ENCODE measurements at regions of chr1 and their contacts with region 1.

Region 1: GRCh38 chr1:235128456-235129328 is at the start of gene TOMM20:
- DNase-seq: peak; percentile 98
- total RNA-seq, gene TOMM20: 75.4 to 86.2 TPM

Region 2: DNA sequence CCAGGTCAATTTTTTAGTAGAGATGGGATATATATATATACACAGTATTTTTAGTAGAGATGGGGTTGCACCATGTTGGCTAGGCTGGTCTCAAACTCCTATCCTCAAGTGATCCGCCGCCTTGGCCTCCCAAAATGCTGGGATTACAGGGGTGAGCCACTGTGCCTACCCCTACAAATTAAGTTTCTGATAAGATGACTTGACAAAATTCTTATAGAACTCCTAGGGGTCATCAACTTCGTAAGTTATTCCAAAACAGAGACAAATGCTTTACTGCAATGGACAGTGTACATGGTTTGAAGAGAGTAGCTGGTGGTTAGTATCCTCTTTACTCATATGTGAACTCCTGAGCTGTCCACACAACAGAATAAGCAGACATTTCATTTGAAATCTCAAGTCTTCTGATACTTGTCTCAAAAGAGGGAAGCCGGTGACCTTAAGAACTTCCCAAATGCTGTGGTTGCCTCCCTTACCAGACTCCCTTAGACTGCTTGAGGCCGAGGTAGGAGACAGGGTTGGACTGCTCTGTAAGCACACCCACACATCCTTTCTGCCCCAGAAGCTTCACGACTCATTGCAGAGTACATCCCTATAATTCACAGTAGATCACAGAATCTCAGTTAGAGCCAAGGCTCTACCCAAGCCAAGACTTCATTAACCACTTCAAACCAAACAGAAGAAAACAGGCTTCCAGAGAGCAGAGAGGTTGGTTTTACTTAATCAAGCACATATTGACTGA is 274.6 kb before region 1 on chr1:
- intact Hi-C with region 1: no loop called
- DNase-seq: no peak

Region 3: DNA sequence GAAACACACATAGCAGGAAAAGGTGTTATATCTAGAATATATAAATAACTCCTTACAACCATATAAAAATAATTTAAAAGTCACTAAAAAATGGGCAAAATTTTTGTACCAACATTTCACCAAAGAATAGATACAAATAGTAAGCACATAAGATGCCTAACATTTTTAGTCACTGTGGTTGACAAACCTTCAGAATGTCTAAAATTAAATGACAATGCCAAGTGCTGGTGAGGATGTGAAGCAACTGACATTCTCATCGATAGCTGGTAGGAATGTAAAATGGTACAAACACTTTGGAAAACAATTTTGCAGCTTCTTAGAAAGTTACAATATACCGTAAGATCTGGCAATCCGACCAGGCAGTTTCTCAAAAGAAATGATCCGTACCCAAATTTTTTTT is 14.3 kb after region 1 on chr1:
- intact Hi-C with region 1: loop called in 1 of 2 experiments (anchors 1 kb)
- DNase-seq: no peak

Region 4: GRCh38 chr1:235181561-235182245 is 53.0 kb after region 1 on chr1:
- intact Hi-C with region 1: no loop called
- DNase-seq: no peak